Aorta (tissue), 5 donors: ENCODE measurements at regions of chr1 and their contacts with region 1.

Region 1: DNA sequence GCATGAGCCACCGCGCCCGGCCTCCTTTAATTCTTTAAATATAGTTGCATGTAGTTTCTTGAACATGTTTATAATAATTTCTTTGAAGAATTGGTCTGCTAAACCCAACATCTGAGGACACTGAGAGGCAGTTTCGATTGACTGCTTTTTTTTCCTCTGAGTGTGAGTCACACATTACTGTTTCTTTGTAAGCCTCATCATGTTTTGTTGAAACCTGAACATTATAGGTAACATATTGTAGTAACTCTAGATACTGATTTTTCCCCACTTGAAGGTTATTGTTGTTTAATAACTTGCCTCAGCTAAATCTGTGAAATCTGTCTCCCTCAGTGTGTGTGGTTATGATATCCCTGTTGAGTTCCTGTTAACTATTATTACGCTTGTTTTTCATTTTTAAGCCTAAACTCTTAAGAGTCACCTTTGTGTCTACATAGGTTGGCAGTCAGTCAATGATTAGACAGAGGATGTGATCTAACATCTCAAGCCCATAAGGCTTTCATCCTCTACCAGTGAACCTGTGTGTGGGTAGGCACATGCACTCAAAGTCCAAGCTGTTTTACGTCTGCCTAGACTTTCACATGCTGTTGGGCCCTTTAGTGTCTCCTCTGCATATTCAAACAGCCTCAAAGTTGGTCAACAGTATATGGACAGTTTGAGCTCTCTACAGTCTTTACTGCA is 155.5 kb downstream of the KCNH1 start:
- DNase-seq: no peak
- ATAC-seq: no peak
- H3K4me3 ChIP-seq: no peak overlapping the region
- H3K27ac ChIP-seq: no peak overlapping the region
- H3K4me1 ChIP-seq: no peaks in the 10 kb centered on the region
- H3K27me3 ChIP-seq: no peaks in the 10 kb centered on the region

Region 2: DNA sequence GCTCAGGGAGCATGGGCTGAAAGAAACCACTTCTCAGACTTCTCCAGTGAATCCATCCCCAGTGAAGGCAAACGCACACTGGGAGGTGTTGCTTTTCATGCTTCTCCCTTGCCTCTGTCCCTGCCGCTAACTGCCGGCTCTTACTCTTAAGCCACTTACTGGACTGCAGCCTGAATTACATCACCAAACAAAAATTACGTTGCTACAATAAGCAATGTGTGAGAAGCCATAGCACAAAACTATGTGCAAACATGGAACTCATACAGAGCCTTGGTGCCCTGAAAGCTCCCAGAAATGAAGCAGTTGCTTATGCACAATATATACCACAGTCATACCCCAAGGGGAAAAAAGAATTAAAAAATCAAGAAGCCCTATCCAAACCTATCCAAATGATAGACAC is 219.7 kb before region 1 on chr1:
- intact Hi-C with region 1: no loop called
- DNase-seq: no peak
- ATAC-seq: no peak
- H3K4me3 ChIP-seq: no peak overlapping the region
- H3K27ac ChIP-seq: no peak overlapping the region
- H3K4me1 ChIP-seq: no peaks in the 10 kb centered on the region
- H3K27me3 ChIP-seq: no peaks in the 10 kb centered on the region

Region 3: GRCh38 chr1:210899676-210900075 is 78.8 kb before region 1 on chr1:
- intact Hi-C with region 1: loop called in 1 of 2 experiments (anchors 10 kb)
- DNase-seq: no peak
- ATAC-seq: no peak
- H3K4me3 ChIP-seq: no peak overlapping the region
- H3K27ac ChIP-seq: no peak overlapping the region
- H3K4me1 ChIP-seq: no peaks in the 10 kb centered on the region
- H3K27me3 ChIP-seq: no peaks in the 10 kb centered on the region

Region 4: GRCh38 chr1:211247921-211248320 is 269.5 kb after region 1 on chr1:
- intact Hi-C with region 1: no loop called
- DNase-seq: no peak
- ATAC-seq: no peak
- H3K4me3 ChIP-seq: no peak overlapping the region
- H3K27ac ChIP-seq: no peak overlapping the region
- H3K4me1 ChIP-seq: no peaks in the 10 kb centered on the region
- H3K27me3 ChIP-seq: no peaks in the 10 kb centered on the region